Activated CD4-positive, alpha-beta T cell treated with anti-CD3 and anti-CD28 coated beads, Interleukin-2, amount 10 ng/mL, durations not matched to agents 24 days and 14 days (primary cell): ENCODE measurements at regions of chr3 and their contacts with region 1.

Region 1: GRCh38 chr3:94062431-94063404 is at the starts of genes DHFR2 and NSUN3:
- DNase-seq: peak; percentile 95
- H3K4me3 Mint-ChIP-seq: peak within 1 kb of the TSS; percentile 98
- H3K27ac Mint-ChIP-seq: peak within 1 kb of the TSS; percentile 99
- H3K4me1 Mint-ChIP-seq: peaks cover 42% of the 10 kb centered on the region
- H3K27me3 Mint-ChIP-seq: no peaks in the 10 kb centered on the region
- total RNA-seq, gene DHFR2: 10.0 and 11.3 TPM in 2 replicates
- total RNA-seq, gene NSUN3: 15.3 and 17.9 TPM in 2 replicates

Region 2: DNA sequence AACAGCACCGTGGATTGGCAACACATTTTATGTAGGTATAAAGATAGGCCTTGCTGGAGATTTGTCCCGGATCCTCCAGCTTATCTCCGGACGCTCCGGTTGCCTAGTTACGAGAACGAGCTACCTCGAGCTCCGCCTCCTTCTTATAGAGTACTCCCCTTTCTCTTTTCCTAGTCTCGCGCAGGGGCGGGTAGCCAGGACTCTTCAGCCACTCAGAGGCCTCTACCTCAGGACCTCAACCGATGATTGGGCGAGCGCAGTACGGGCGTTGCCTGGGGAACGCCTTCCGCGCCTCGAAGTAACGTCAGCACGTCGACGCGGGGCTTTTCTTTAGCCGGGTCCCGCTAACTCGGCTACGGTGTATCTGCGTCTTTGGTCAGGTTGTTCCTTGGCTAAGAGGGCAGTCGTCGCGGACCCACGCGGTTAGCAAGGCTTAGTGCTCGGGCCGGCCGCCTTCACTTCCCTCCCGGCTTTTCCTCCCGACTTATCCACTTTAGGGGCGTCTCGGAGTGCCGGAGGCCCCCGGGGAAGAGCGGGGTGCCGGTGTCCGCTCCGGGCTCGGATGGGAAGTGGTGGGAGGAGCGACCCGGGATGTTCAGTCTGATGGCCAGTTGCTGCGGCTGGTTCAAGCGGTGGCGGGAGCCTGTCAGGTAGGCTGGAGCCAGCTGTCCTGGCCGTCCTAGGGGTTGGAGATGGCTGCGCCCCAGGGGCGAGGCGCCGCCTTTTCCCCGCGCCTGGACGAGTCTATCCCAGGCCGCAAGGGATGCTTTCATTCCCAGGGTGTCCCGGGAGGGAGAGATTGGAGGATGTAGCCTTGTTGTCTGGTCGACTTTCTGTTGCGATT is 82.7 kb before region 1 on chr3 and contains the start of gene ARL13B:
- intact Hi-C with region 1: loop called (anchors 1 kb)
- DNase-seq: peak; percentile 98
- H3K4me3 Mint-ChIP-seq: peak within 1 kb of the TSS; percentile 90
- H3K27ac Mint-ChIP-seq: peak within 1 kb of the TSS; percentile 91
- H3K4me1 Mint-ChIP-seq: peaks cover 19% of the 10 kb centered on the region
- H3K27me3 Mint-ChIP-seq: no peaks in the 10 kb centered on the region
- total RNA-seq, gene ARL13B: 12.2 and 16.6 TPM in 2 replicates